ENCODE measurements at regions of chr3 and their contacts with region 1.

Region 1: DNA sequence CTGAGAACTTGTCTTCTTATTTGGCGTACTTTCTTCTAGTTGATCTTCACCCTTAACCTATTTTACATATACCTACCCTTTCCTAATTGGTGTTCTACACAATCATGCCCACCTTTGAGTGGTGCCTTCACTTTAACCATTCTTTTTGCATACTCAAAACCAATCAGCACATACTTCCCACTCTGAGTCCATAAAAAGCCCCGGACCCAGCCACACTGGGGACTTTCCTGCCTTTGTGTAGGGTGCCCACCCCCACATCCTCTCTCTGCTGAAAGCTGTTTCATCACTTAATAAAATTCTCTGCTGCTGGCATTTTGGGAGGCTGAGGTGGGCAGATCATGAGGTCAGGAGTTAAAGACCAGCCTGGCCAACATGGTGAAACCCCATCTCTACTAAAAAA is 15.9 kb upstream of the CHST2 start:
- DNase-seq: no peak
- ATAC-seq: no peak
- H3K4me3 ChIP-seq: no peak overlapping the region
- H3K27ac ChIP-seq: no peak overlapping the region
- H3K4me1 ChIP-seq: no peaks in the 10 kb centered on the region
- H3K27me3 ChIP-seq: peaks cover 9% of the 10 kb centered on the region
- CTCF ChIP-seq: no peak
- POLR2A ChIP-seq: no peak
- RAD21 ChIP-seq: no peak

Region 2: GRCh38 chr3:142077849-142078500 is 1025.7 kb before region 1 on chr3:
- CTCF ChIA-PET with region 1: no interaction called
- POLR2A ChIA-PET with region 1: no interaction called
- dilution Hi-C with region 1: no loop called
- in situ Hi-C with region 1: no loop called
- intact Hi-C with region 1: no loop called
- DNase-seq: no peak
- ATAC-seq: no peak
- H3K4me3 ChIP-seq: no peak overlapping the region
- H3K27ac ChIP-seq: no peak overlapping the region
- H3K4me1 ChIP-seq: no peaks in the 10 kb centered on the region
- H3K27me3 ChIP-seq: no peaks in the 10 kb centered on the region
- CTCF ChIP-seq: no peak
- POLR2A ChIP-seq: no peak
- RAD21 ChIP-seq: no peak

Region 3: GRCh38 chr3:143090976-143091837 is 12.4 kb before region 1 on chr3:
- CTCF ChIA-PET with region 1: no interaction called
- POLR2A ChIA-PET with region 1: no interaction called
- dilution Hi-C with region 1: no loop called
- in situ Hi-C with region 1: no loop called
- intact Hi-C with region 1: loop called (anchors 1 kb)
- DNase-seq: no peak
- ATAC-seq: no peak
- H3K4me3 ChIP-seq: no peak overlapping the region
- H3K27ac ChIP-seq: no peak overlapping the region
- H3K4me1 ChIP-seq: no peaks in the 10 kb centered on the region
- H3K27me3 ChIP-seq: peaks cover 9% of the 10 kb centered on the region
- CTCF ChIP-seq: no peak
- POLR2A ChIP-seq: no peak
- RAD21 ChIP-seq: no peak

Region 4: DNA sequence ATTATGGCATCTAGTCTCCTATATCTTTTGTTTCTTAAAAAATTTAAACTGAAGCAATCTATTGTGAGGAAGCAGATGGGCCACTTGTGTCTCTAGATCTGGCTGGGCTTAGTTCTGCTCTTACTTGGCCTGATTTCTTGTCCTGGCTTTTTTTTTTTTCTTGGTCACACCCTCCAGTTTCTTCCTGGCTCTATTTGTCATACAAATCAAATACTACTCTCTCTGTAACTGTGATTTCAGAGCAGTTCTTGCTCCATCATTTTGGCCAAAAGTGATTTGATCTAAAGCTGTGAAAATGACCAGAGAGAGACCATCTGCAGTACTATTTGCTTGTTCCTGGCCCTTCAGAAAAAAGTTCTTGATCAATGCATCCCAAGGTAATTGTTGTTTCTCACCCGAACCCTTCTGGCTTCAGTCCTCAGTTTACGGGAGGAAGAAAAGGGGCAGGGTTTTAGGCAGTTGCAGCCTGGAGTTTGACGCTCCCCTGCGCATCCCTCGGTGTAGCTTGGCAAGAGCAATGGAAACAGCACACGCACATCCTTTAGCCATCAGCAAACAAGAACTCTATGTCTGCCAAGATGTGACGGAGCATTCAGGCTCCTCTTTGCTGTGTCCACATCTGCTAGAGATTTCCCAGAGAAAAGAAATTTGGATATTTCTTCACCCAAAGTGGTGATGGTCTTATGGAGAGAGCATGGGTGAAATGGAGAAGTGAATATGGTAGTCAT is 47.5 kb after region 1 on chr3:
- CTCF ChIA-PET with region 1: no interaction called
- POLR2A ChIA-PET with region 1: no interaction called
- dilution Hi-C with region 1: no loop called
- in situ Hi-C with region 1: no loop called
- intact Hi-C with region 1: no loop called
- DNase-seq: no peak
- ATAC-seq: no peak
- H3K4me3 ChIP-seq: no peak overlapping the region
- H3K27ac ChIP-seq: no peak overlapping the region
- H3K4me1 ChIP-seq: no peaks in the 10 kb centered on the region
- H3K27me3 ChIP-seq: peaks cover 2% of the 10 kb centered on the region; the same call in 1 of the 2 replicates
- CTCF ChIP-seq: no peak
- POLR2A ChIP-seq: no peak
- RAD21 ChIP-seq: no peak

Region 5: GRCh38 chr3:143654906-143655305 is 551.3 kb after region 1 on chr3:
- CTCF ChIA-PET with region 1: no interaction called
- POLR2A ChIA-PET with region 1: no interaction called
- dilution Hi-C with region 1: no loop called
- in situ Hi-C with region 1: loop called (anchors 10 kb)
- intact Hi-C with region 1: no loop called
- DNase-seq: no peak
- ATAC-seq: no peak
- H3K4me3 ChIP-seq: no peak overlapping the region
- H3K27ac ChIP-seq: no peak overlapping the region
- H3K4me1 ChIP-seq: no peaks in the 10 kb centered on the region
- H3K27me3 ChIP-seq: no peaks in the 10 kb centered on the region
- CTCF ChIP-seq: no peak
- POLR2A ChIP-seq: no peak
- RAD21 ChIP-seq: no peak